Activated T-helper 1 cell treated with anti-CD3 and anti-CD28 coated beads, Interleukin-12 subunit alpha, Interleukin-12 subunit beta, Interleukin-2, Interleukin-4 antibody, amounts not matched to agents 30 ng/mL and 10 ng/mL and 1 ng/mL, durations not matched to agents 14 hours and 24 hours and 36 hours (primary cell): ENCODE measurements at regions of chrX and their contacts with region 1.

Region 1: GRCh38 chrX:132740316-132741123 is 217.9 kb downstream of the HS6ST2 start:
- DNase-seq: no peak
- H3K4me3 Mint-ChIP-seq: no peak overlapping the region
- H3K27ac Mint-ChIP-seq: no peak overlapping the region
- H3K4me1 Mint-ChIP-seq: peaks cover 28% of the 10 kb centered on the region
- H3K27me3 Mint-ChIP-seq: no peaks in the 10 kb centered on the region

Region 2: DNA sequence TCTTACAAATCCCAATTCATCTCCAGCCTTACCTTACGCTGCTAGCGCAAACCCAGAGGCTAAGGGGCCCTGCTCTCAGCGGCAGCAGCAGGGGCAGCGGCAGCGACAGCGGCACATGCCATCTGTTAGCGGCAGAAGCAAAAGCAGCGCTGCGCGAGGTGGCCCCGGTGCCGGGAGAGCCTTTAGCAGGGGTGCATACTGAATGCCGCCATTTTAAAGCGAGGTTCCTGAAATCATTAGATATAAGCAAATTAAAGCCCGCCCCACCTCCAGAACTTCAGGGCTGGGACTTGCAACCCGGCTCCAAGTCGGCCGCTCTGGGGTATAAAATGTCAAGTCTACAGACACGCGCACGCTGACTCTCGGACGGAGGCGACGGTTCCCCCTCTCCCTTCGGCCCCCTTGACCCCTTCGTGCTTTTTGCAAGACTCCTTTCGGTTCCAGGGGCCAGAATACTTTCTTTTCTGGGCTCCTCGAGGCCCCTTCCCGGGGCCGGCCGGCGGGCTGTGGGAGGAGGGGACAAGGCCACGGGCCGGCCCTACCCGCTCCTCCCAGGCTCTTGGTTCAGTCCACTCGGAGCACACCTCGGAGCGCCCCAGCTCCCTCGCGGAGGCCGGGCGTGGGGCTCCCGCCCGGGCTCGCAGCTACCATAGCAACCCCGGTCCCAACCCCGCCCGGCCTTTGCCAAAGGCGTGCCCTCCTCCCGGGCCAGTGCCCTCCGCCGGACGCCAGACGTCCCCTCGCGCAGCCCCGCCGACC is 251.5 kb before region 1 on chrX and contains the start of gene MBNL3:
- intact Hi-C with region 1: loop called (anchors 10 kb)
- DNase-seq: peak; percentile 45
- H3K4me3 Mint-ChIP-seq: peak within 1 kb of the TSS; percentile 95
- H3K27ac Mint-ChIP-seq: peak within 1 kb of the TSS; percentile 94
- H3K4me1 Mint-ChIP-seq: peaks cover 28% of the 10 kb centered on the region
- H3K27me3 Mint-ChIP-seq: peaks cover 7% of the 10 kb centered on the region
- total RNA-seq, gene MBNL3: 8.9 and 12.3 TPM in 2 replicates

Region 3: DNA sequence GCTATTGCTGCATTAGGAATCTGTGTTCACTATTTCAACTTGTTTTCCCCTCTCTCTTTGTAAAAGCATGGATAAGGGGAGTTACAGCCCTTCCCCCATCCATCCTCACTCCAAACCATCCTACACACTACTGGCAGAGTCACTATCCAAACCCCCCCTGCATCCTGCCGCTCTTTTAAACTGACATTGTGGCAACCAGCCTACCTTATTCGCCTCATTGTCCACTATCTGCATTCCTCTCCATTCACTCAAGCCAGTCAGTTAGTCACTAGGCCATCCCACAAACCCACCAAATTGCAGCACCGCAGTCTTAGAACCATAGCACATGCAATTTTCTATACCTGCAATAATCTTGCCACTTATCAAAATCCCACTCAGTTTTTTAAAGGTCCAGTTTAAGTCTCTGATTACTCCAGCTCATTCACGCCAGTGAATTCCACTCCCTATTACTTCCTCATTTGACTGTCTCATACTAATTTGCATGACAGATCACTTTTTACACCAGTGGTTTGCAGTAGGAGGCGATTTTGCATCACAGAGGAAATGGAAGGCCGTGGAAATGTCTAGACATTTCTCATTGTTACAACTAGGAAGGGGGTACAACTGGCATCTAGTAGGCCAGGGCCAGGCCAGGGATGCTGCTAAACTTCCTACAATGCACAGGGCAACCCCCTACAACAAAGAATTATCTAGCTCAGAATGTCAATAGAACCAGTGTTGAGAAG is 36.1 kb after region 1 on chrX:
- intact Hi-C with region 1: loop called (anchors 5 kb)
- DNase-seq: no peak
- H3K4me3 Mint-ChIP-seq: no peak overlapping the region
- H3K27ac Mint-ChIP-seq: no peak overlapping the region
- H3K4me1 Mint-ChIP-seq: peaks cover 19% of the 10 kb centered on the region
- H3K27me3 Mint-ChIP-seq: no peaks in the 10 kb centered on the region

Region 4: DNA sequence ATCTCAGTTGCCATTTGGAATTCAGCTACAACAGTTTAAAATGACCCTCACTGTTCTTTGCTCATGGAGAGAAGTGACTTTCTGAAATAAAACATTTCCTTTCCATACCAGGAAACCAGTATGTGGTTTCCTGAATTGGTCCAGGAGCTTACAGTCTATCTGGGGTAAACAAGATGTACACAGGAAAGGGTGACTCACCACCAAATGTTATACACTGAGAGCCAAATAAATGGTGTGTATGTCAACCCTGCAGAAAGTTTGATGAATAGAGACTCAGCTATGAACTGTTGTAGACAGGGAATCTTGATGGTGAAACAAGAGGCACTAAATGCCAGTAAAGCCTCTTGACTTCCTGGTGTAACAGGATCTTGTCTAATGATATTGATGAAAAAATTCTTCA is 117.5 kb after region 1 on chrX:
- intact Hi-C with region 1: loop called (anchors 5 kb)
- DNase-seq: no peak
- H3K4me3 Mint-ChIP-seq: no peak overlapping the region
- H3K27ac Mint-ChIP-seq: peak overlapping the region; percentile 13
- H3K4me1 Mint-ChIP-seq: peaks cover 21% of the 10 kb centered on the region
- H3K27me3 Mint-ChIP-seq: no peaks in the 10 kb centered on the region

Region 5: GRCh38 chrX:132957211-132958090 is 216.9 kb after region 1 on chrX:
- intact Hi-C with region 1: loop called (anchors 5 kb)
- DNase-seq: no peak
- H3K4me3 Mint-ChIP-seq: peak overlapping the region; percentile 79
- H3K27ac Mint-ChIP-seq: peak overlapping the region; percentile 40
- H3K4me1 Mint-ChIP-seq: no peaks in the 10 kb centered on the region
- H3K27me3 Mint-ChIP-seq: peaks cover 39% of the 10 kb centered on the region

Region 6: GRCh38 chrX:133380711-133381619 is 640.4 kb after region 1 on chrX:
- intact Hi-C with region 1: no loop called
- DNase-seq: no peak
- H3K4me3 Mint-ChIP-seq: no peak overlapping the region
- H3K27ac Mint-ChIP-seq: no peak overlapping the region
- H3K4me1 Mint-ChIP-seq: no peaks in the 10 kb centered on the region
- H3K27me3 Mint-ChIP-seq: peaks cover 5% of the 10 kb centered on the region